Activated CD4-positive, alpha-beta memory T cell treated with anti-CD3 and anti-CD28 coated beads, Interleukin-2, amount 10 ng/mL, durations not matched to agents 7 days and 5 days (primary cell): ENCODE measurements at regions of chr1 and their contacts with region 1.

Region 1: GRCh38 chr1:110196917-110197765 is 13.0 kb upstream of the KCNC4 start:
- DNase-seq: peak; percentile 56
- H3K4me3 Mint-ChIP-seq: no peak overlapping the region
- H3K27ac Mint-ChIP-seq: no peak overlapping the region
- H3K4me1 Mint-ChIP-seq: no peaks in the 10 kb centered on the region
- H3K27me3 Mint-ChIP-seq: no peaks in the 10 kb centered on the region

Region 2: GRCh38 chr1:110312188-110313121 is 115.3 kb after region 1 on chr1:
- CTCF ChIA-PET with region 1: interaction called, 66 read pairs
- POLR2A ChIA-PET with region 1: no interaction called
- DNase-seq: peak; percentile 68
- H3K4me3 Mint-ChIP-seq: no peak overlapping the region
- H3K27ac Mint-ChIP-seq: no peak overlapping the region
- H3K4me1 Mint-ChIP-seq: no peaks in the 10 kb centered on the region
- H3K27me3 Mint-ChIP-seq: no peaks in the 10 kb centered on the region

Region 3: DNA sequence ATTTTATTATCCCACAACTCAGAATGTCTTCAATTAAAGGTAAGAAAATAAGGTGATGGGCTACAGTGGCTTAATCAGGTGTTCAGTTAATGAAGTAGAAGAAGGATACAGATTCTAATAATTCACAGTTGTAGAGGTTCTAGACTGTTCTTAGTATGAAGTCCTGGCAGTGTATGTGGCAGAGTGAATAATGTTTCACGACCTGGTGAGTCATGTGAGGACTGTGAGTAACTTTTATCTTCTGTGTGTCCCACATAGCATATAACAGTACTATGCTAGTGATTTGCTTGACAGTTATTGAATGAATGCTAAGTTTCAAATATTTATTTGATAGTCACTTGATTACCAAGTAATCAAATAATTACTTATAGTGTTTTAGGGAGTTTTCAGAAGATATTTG is 173.7 kb after region 1 on chr1:
- CTCF ChIA-PET with region 1: no interaction called
- POLR2A ChIA-PET with region 1: no interaction called
- DNase-seq: no peak
- H3K4me3 Mint-ChIP-seq: no peak overlapping the region
- H3K27ac Mint-ChIP-seq: no peak overlapping the region
- H3K4me1 Mint-ChIP-seq: peaks cover 14% of the 10 kb centered on the region
- H3K27me3 Mint-ChIP-seq: no peaks in the 10 kb centered on the region